Pancreas (tissue), 10 donors: ENCODE measurements at regions of chr6 and their contacts with region 1.

Region 1: DNA sequence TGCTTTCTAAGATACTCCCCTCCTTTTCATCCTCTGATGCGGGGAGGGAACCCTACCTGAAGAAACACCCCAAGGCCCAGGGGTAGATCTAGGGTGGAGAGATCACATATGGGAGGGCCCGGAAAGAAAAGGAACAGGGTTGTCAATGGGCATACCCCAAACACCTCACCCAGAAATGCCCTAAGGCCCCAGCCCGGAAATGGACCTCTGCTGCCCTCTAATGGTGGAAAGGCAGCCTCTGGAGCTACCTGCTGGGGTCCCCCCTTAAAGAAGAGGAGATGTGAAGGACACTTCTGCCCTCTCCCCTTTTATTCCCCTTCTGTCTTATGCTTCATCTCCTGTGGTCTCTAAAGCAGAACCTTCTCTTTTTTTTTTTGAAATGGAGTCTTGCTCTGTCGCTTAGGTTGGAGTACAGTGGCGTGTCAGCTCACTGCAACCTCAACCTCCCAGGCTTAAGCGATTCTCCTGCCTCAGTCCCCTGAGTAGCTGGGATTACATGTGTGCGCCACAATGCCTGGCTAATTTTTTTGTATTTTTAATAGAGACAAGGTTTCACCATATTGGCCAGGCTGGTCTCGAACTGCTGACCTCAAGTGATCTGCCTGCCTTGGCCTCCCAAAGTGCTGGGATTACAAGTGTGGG is 458 bp upstream of the ARMC12 start:
- DNase-seq: peak; percentile 54 to 85 (median 74)
- ATAC-seq: peak; percentile 35 to 67 (median 50)
- H3K4me3 ChIP-seq: no peak overlapping the region
- H3K27ac ChIP-seq: no peak overlapping the region
- H3K4me1 ChIP-seq: peaks cover 32 to 38% (median 34%) of the 10 kb centered on the region in 3 donors
- H3K27me3 ChIP-seq: no peaks in the 10 kb centered on the region
- CTCF ChIP-seq: peak; percentile 69 to 87 (median 81)

Region 2: GRCh38 chr6:35522660-35523658 is 213.4 kb before region 1 on chr6:
- intact Hi-C with region 1: loop called in 2 of 3 experiments (anchors 5 kb)
- DNase-seq: peak; percentile 51 to 94 (median 79)
- ATAC-seq: peak; percentile 90 to 99 (median 96)
- H3K4me3 ChIP-seq: peak overlapping the region in 2 of 4 donors; percentile 8 to 31
- H3K27ac ChIP-seq: no peak overlapping the region
- H3K4me1 ChIP-seq: no peaks in the 10 kb centered on the region
- H3K27me3 ChIP-seq: no peaks in the 10 kb centered on the region
- CTCF ChIP-seq: peak; percentile 97 to 100 (median 98)

Region 3: GRCh38 chr6:35583893-35584688 is 152.3 kb before region 1 on chr6:
- intact Hi-C with region 1: loop called (anchors 5 to 10 kb)
- DNase-seq: peak in 4 of 6 donors; percentile 47 to 76 (median 68)
- ATAC-seq: peak; percentile 69 to 98 (median 93)
- H3K4me3 ChIP-seq: no peak overlapping the region
- H3K27ac ChIP-seq: no peak overlapping the region
- H3K4me1 ChIP-seq: peaks cover 0 to 16% (median 0%) of the 10 kb centered on the region in 3 donors
- H3K27me3 ChIP-seq: no peaks in the 10 kb centered on the region
- CTCF ChIP-seq: peak; percentile 29 to 69 (median 45)

Region 4: GRCh38 chr6:35688581-35689322 is 47.6 kb before region 1 on chr6 and contains the start of gene FKBP5:
- intact Hi-C with region 1: loop called in 1 of 3 experiments (anchors 5 kb)
- DNase-seq: peak; percentile 90 to 97 (median 96)
- ATAC-seq: peak; percentile 90 to 93 (median 92)
- H3K4me3 ChIP-seq: peak within 1 kb of the TSS; percentile 62 to 87 (median 86)
- H3K27ac ChIP-seq: peak within 1 kb of the TSS; percentile 83 to 87 (median 86)
- H3K4me1 ChIP-seq: peaks cover 0 to 32% (median 0%) of the 10 kb centered on the region in 3 donors
- H3K27me3 ChIP-seq: no peaks in the 10 kb centered on the region
- CTCF ChIP-seq: no peak
- total RNA-seq, gene FKBP5: 13.0 to 78.4 (median 61.3) TPM